Gastrocnemius medialis (tissue), 4 donors: ENCODE measurements at regions of chr2 and their contacts with region 1.

Region 1: GRCh38 chr2:239463541-239464165 is 62.8 kb upstream of the HDAC4 start:
- DNase-seq: peak; percentile 69 to 70
- ATAC-seq: peak; percentile 93 to 95
- H3K4me3 ChIP-seq: no peak overlapping the region
- H3K27ac ChIP-seq: peak overlapping the region in 3 of 4 donors; percentile 41 to 64 (median 50)
- H3K4me1 ChIP-seq: peaks cover 7 to 15% of the 10 kb centered on the region in 2 donors
- H3K27me3 ChIP-seq: no peaks in the 10 kb centered on the region
- CTCF ChIP-seq: no peak
- POLR2A ChIP-seq: no peak

Region 2: DNA sequence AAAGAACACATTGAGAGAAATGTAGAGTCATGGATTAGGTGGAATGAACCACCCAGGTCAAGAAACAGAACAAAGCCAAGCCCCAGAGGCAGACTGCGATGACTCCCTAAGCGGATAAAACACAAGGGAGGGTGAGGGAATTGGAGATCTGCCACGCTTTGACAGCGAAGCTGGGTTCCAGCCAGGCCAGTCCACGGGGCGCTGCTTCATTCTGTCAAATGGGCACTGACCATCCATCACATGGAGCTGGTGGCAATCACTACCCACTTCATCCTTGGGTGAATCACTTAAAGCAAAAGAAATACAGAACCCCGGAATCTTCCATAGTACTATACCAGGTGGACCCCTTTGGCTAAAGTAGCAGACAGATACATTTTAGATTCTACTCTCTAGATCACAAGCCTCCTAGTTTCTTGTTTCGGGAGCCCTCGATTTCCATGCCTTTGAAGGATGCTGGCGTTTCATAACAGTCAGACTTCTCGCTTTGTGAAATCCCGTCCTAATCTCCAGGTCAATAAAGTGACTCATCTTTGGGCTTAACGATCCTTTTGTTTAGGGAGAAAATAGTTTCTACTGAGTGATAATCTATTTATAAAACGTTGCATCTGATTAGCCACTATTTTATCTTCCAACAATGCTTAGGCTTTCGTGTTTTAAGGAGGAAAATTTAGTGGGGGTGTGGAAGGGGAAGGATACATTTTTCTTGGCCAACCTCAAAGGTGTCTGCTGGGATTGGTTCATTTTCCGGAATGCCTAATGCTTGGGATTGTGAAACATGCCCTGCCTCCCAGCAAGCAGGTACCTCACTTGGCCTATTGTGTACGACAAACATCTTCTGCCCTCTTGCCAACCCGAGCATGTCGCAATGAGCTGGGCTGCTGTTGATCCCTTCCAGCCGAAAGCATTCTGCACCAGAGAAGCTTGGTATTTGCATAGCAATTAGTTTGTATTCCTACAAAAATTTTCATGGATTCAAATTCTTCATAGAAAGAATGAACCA is 18.7 kb before region 1 on chr2:
- in situ Hi-C with region 1: no loop called
- intact Hi-C with region 1: loop called (anchors 1 kb)
- DNase-seq: peak in 1 of 2 donors; percentile 57
- ATAC-seq: peak; percentile 74 to 78
- H3K4me3 ChIP-seq: no peak overlapping the region
- H3K27ac ChIP-seq: peak overlapping the region in 1 of 4 donors; percentile 52
- H3K4me1 ChIP-seq: peaks cover 7 to 13% of the 10 kb centered on the region in 2 donors
- H3K27me3 ChIP-seq: peaks cover 4 to 7% (median 7%) of the 10 kb centered on the region in 3 donors
- CTCF ChIP-seq: no peak
- POLR2A ChIP-seq: no peak

Region 3: GRCh38 chr2:239544143-239544917 is 80.7 kb after region 1 on chr2:
- in situ Hi-C with region 1: no loop called
- intact Hi-C with region 1: loop called (anchors 5 kb)
- DNase-seq: peak in 1 of 2 donors; percentile 4
- ATAC-seq: no peak
- H3K4me3 ChIP-seq: no peak overlapping the region
- H3K27ac ChIP-seq: no peak overlapping the region
- H3K4me1 ChIP-seq: peaks cover 7 to 10% of the 10 kb centered on the region in 2 donors
- H3K27me3 ChIP-seq: no peaks in the 10 kb centered on the region
- CTCF ChIP-seq: no peak
- POLR2A ChIP-seq: no peak

Region 4: DNA sequence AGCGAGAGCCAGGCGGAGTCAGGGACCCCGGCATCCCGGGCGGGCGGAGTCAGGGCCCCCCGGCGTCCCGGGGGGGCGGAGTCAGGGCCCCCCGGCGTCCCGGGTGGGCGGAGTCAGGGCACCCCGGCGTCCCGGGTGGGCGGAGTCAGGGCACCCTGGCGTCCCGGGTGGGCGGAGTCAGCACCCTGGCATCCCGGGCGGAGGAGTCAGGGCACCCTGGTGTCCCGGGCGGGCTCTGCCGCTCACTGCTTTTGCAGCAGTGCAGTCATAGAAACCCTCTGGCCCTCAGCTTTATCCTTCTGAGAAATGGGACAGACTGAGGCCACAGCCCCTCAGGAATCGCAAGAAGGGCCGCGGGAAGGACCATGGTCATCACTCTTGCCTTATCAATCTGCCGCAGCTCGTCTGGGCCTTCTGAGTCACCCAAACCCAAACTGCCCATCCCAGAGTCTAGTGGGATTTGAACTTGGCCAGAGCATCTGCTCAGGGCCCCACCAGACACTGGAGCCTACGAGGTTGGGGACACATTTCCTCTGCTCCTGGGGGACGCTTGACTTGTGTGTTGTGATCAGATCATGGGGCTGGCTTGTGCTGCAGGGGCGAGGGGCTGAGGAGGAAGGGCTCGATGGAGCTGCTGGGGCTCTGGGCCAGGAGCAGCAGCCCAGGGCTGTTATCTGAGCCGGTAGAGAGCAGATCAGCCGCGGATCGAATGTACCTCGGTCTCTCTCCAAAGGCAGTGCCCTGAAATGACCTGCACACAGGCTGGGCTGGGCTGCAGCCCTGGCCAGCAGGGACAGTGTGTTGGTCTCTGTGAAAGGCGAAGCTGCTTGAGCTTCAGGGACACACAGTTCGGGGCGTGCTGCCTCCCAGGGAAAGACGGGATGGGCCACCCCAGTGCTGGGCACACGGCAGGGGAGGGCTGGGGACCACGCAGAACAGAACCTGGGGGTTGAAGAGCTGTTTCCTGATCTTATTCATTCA is 227.3 kb after region 1 on chr2:
- in situ Hi-C with region 1: no loop called
- intact Hi-C with region 1: loop called (anchors 1 kb)
- DNase-seq: peak; percentile 68
- ATAC-seq: peak; percentile 72 to 73
- H3K4me3 ChIP-seq: peak overlapping the region in 2 of 4 donors; percentile 0 to 25
- H3K27ac ChIP-seq: peak overlapping the region; percentile 75 to 83 (median 81)
- H3K4me1 ChIP-seq: peaks cover 33 to 41% of the 10 kb centered on the region in 2 donors
- H3K27me3 ChIP-seq: no peaks in the 10 kb centered on the region
- CTCF ChIP-seq: peak in 2 of 5 experiments; percentile 21 to 22
- POLR2A ChIP-seq: peak in 1 of 2 donors; percentile 63

Region 5: GRCh38 chr2:240250985-240251847 is 787.6 kb after region 1 on chr2:
- in situ Hi-C with region 1: no loop called
- intact Hi-C with region 1: no loop called
- DNase-seq: peak; percentile 91 to 97
- ATAC-seq: peak; percentile 79 to 82
- H3K4me3 ChIP-seq: peak overlapping the region; percentile 15 to 41 (median 32)
- H3K27ac ChIP-seq: peak overlapping the region; percentile 93 to 96 (median 95)
- H3K4me1 ChIP-seq: peaks cover 43 to 47% of the 10 kb centered on the region in 2 donors
- H3K27me3 ChIP-seq: no peaks in the 10 kb centered on the region
- CTCF ChIP-seq: no peak
- POLR2A ChIP-seq: peak; percentile 85